CD8-positive, alpha-beta T cell (primary cell): ENCODE measurements at regions of chr9 and their contacts with region 1.

Region 1: DNA sequence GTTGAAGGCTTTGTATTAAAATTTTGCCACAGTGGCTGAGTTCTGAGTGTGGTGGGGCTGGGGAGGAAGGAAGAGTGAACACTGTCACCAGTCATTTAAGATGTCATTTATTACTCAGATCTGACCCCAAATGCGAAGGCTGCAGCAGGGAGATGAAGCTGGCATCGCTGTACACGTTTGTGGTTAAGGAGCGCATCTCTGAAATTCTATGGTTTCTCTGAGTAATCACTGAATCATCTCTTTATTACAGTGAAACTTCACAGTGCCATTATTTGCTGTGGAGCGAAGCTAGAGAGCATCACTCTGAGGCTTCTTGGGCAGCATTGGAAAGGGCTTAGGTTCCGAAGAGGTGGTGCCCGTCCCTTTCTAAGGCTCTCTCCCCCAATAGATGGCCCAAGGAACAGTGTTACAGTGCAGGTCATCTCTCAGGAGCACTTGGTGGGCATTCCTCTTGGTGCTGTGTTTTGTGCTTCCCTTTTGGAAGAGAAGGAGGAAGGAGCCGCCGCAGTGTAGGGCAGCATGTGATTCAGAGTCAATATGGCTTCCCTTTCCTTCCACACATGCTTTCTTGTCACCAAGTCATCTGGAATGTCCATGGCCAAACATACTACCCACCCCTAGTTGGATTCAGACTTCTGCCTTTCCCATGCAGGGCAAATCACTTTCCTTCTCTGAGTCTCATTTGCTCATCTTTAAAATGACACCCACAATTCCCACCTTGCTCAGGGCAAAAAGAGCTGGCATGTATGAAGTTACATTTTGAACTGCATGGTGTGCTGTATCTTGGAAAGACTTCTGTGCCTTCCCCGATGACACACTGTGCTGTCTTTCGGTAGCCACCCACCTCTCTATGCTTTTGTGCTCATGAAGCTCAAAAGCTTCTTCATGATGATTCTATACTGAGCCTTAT is 9.3 kb upstream of the TEX48 start:
- DNase-seq: peak; percentile 11 to 82 (median 56)
- ATAC-seq: peak; percentile 91
- H3K4me3 ChIP-seq: peak overlapping the region in 1 of 2 experiments; percentile 13
- H3K4me3 Mint-ChIP-seq: peak overlapping the region; percentile 33
- H3K27ac ChIP-seq: peak overlapping the region in 1 of 2 experiments; percentile 58
- H3K27ac Mint-ChIP-seq: peak overlapping the region; percentile 61
- H3K4me1 ChIP-seq: no peaks in the 10 kb centered on the region
- H3K4me1 Mint-ChIP-seq: peaks cover 17% of the 10 kb centered on the region
- H3K27me3 ChIP-seq: no peaks in the 10 kb centered on the region
- H3K27me3 Mint-ChIP-seq: no peaks in the 10 kb centered on the region
- CTCF ChIP-seq: no peak

Region 2: DNA sequence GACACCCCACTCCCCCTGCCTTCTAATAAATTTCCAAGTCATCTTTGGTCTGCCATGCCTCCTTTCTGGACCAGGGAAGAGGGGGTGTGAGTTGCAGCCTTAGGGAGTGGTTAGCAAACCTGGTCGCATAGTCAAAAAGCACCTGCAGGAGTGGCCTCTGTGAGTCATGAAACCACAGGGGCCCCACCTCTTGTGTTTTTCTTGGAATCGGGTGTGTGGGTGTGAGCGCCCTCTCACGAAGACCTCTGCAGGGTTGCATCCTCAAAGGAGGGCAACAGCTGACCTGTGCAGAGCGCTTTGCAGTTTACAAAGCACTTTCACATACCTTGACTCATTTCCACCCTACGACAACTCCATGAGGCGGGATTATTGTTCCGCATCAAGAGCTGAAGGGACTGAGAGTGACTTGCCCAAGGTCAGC is 27.5 kb after region 1 on chr9:
- CTCF ChIA-PET with region 1: no interaction called
- POLR2A ChIA-PET with region 1: no interaction called
- intact Hi-C with region 1: loop called in 1 of 2 experiments (anchors 2 kb)
- DNase-seq: peak; percentile 24 to 84 (median 75)
- ATAC-seq: peak; percentile 92
- H3K4me3 ChIP-seq: peak overlapping the region in 1 of 2 experiments; percentile 18
- H3K4me3 Mint-ChIP-seq: peak overlapping the region; percentile 27
- H3K27ac ChIP-seq: no peak overlapping the region
- H3K27ac Mint-ChIP-seq: peak overlapping the region; percentile 67
- H3K4me1 ChIP-seq: peaks cover 27% of the 10 kb centered on the region
- H3K4me1 Mint-ChIP-seq: peaks cover 37% of the 10 kb centered on the region
- H3K27me3 ChIP-seq: no peaks in the 10 kb centered on the region
- H3K27me3 Mint-ChIP-seq: no peaks in the 10 kb centered on the region
- CTCF ChIP-seq: no peak